ENCODE measurements at regions of chr11 and their contacts with region 1.

Region 1: GRCh38 chr11:75022759-75023396 is 34.1 kb downstream of the NEU3 start:
- DNase-seq: peak; percentile 88
- H3K4me3 Mint-ChIP-seq: no peak overlapping the region
- H3K27ac Mint-ChIP-seq: no peak overlapping the region
- H3K4me1 Mint-ChIP-seq: peaks cover 8% of the 10 kb centered on the region
- H3K27me3 Mint-ChIP-seq: no peaks in the 10 kb centered on the region
- CTCF ChIP-seq: peak; percentile 97

Region 2: DNA sequence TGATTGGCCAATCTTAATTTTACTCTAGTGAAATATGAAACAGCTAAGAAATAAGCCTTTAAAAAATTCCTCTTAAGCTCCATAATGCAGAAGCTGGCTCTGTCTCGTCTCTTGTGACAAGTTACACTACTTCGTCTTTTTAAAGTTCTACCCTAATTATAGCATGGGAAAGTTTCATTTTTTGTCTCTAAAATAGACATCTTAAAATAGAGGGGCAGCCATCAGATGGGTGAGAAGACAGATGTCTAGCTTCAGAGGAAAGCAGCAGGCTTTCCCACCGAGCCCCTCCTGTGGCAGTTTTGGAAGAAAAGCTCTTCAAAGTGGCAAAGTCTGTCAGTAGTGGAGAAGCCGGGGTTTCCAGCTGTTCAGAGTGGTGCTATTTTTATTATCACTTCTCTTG is 113.5 kb before region 1 on chr11:
- CTCF ChIA-PET with region 1: no interaction called
- intact Hi-C with region 1: no loop called
- DNase-seq: no peak
- H3K4me3 Mint-ChIP-seq: no peak overlapping the region
- H3K27ac Mint-ChIP-seq: no peak overlapping the region
- H3K4me1 Mint-ChIP-seq: no peaks in the 10 kb centered on the region
- H3K27me3 Mint-ChIP-seq: no peaks in the 10 kb centered on the region
- CTCF ChIP-seq: no peak

Region 3: DNA sequence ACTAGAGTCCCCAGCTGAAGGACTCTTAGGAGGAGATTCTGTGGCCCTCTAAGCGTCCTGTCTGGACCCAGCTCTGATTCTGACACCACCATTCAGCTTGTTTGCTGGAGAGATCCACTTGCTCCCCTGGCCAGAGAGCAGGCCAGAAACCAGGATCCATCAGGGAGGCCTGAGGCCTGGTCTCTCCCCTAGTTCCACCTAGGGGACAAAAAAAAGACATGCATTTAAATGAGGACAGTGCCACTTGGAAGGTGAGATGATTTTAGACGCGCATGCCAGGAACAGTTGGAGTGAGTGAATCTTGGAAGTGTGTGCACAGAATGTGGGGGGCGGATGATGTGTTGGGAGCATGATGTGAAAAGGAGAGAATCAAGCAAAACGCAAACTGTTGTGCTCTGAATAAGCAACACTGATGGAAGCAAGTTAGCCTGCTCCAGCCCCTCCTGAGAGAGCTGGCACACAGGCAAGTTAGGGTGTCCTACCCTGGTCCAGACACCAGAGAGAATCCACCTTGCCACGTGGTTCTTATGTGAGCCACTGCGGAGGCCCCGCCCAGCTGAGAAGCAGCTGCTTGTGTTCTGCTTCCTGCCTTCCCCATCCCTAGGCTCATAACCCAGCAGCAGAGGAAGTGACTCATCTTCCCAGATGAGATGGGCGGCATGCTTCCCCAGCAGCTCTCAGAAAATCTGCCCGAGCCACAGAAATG is 120.0 kb after region 1 on chr11:
- CTCF ChIA-PET with region 1: interaction called, 28 read pairs
- intact Hi-C with region 1: loop called (anchors 2 kb)
- DNase-seq: peak; percentile 54
- H3K4me3 Mint-ChIP-seq: no peak overlapping the region
- H3K27ac Mint-ChIP-seq: peak overlapping the region; percentile 24
- H3K4me1 Mint-ChIP-seq: peaks cover 13% of the 10 kb centered on the region
- H3K27me3 Mint-ChIP-seq: peaks cover 32% of the 10 kb centered on the region
- CTCF ChIP-seq: no peak